Heart right ventricle (tissue), 16 donors: ENCODE measurements at regions of chr15 and their contacts with region 1.

Region 1: GRCh38 chr15:100349696-100350433 is 8.1 kb upstream of the ADAMTS17 start:
- DNase-seq: peak; percentile 93
- ATAC-seq: peak; percentile 95 to 98 (median 98)
- H3K4me3 ChIP-seq: peak overlapping the region; percentile 38 to 90 (median 77)
- H3K27ac ChIP-seq: peak overlapping the region; percentile 64 to 99 (median 94)
- H3K4me1 ChIP-seq: peaks cover 0 to 15% (median 5%) of the 10 kb centered on the region in 9 donors
- H3K27me3 ChIP-seq: peaks cover 0 to 15% (median 11%) of the 10 kb centered on the region in 7 donors
- CTCF ChIP-seq: peak; percentile 78 to 93 (median 81)

Region 2: DNA sequence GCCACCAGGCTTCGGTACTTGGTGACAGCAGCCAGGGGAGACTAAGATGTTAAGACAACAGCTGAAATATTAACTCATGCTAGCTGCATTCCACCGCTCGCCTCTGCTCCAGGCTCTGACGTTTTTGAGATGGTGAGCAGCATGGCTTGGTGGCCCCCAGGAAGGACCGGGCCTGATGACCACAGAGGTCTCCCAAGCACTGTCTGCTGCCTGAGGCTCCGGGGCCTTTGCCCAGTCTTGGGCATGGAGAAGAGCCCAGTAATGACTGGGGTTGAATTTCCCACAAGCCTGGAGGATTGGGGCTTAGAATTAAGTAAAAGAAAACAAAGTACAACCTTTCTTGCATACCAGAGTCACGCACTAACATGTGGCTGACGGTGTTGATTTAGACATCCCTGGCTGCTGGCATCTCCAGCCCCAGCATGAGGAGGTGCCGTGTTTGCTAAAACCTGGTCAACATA is 373.0 kb before region 1 on chr15:
- intact Hi-C with region 1: loop called in 1 of 10 experiments (anchors 10 kb)
- DNase-seq: no peak
- ATAC-seq: no peak
- H3K4me3 ChIP-seq: no peak overlapping the region
- H3K27ac ChIP-seq: no peak overlapping the region
- H3K4me1 ChIP-seq: peaks cover 0 to 11% (median 0%) of the 10 kb centered on the region in 9 donors
- H3K27me3 ChIP-seq: no peaks in the 10 kb centered on the region
- CTCF ChIP-seq: no peak

Region 3: GRCh38 chr15:100565591-100565990 is 215.7 kb after region 1 on chr15:
- intact Hi-C with region 1: loop called in 5 of 10 experiments (anchors 2 to 10 kb)
- DNase-seq: no peak
- ATAC-seq: no peak
- H3K4me3 ChIP-seq: no peak overlapping the region
- H3K27ac ChIP-seq: no peak overlapping the region
- H3K4me1 ChIP-seq: peaks cover 0 to 5% (median 0%) of the 10 kb centered on the region in 9 donors
- H3K27me3 ChIP-seq: no peaks in the 10 kb centered on the region
- CTCF ChIP-seq: no peak

Region 4: DNA sequence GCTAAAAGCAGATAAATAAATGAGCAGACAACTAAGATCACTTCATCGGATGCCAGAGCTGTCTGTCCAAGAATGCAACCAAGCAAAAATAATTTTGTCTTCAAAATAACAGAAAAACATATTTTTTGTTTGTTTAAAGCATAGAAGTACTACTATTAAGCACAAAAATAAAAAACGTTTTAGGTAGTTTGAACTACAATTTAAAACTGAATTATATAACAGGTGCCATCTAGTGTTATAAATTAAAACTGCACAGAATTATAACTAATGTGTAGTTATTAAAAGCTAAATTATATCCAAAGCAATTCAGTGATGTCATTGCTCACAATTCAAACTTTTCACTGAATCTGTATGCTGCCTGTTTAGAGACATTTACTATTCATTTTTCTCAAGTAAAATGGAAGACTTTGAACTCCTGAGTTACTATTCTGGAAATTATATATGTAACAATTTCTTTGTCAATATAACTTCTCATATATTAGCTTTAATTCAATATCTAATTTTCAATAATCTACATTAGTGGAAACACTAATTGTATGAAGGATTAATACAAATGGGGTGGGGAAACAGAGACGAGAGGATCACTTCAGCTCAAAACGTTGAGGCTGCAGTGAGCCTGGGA is 222.6 kb after region 1 on chr15:
- intact Hi-C with region 1: loop called in 9 of 10 experiments (anchors 1 to 10 kb)
- DNase-seq: no peak
- ATAC-seq: no peak
- H3K4me3 ChIP-seq: no peak overlapping the region
- H3K27ac ChIP-seq: no peak overlapping the region
- H3K4me1 ChIP-seq: peaks cover 0 to 4% (median 0%) of the 10 kb centered on the region in 9 donors
- H3K27me3 ChIP-seq: no peaks in the 10 kb centered on the region
- CTCF ChIP-seq: peak; percentile 35 to 72 (median 67)

Region 5: DNA sequence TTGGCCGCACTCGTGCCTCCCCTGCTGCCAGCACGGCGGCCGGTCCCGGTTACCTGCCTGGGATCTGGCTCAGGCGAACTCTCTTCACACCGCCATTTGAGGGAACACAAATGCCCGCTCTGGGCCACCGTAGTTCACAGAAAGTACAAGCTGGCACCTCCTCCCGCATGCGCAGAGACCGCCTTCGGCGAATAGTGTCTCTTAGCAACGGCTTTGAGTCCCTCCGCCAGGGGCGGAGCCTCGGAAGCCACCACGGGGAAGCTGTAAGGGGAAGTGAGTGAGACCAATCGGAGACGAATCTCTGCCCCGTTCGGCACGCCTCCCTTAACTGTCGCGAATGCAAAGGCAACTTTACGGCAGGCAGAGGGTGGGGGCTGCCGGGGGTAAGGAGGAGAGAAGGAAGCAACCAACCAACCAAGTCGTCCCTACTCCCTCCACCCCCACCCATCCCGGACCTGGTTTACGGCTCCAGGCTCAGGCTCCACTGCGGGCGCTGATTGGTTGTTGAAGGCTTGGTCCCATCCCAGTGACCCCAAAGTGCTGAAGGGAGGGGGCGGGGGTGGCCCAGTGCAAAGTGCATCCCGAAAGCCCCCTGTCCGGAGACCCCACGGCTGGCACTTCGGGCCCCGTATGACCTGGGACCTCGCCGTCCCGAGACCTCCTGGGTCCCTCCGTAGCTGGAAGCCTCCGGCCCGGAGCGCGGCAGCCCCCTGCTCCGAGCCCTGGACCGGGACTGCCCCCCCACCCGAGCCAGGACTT is 252.4 kb after region 1 on chr15 and contains the starts of genes ASB7 and LINS1:
- intact Hi-C with region 1: loop called in 2 of 10 experiments (anchors 1 to 10 kb)
- DNase-seq: peak; percentile 100
- ATAC-seq: peak; percentile 97 to 99 (median 99)
- H3K4me3 ChIP-seq: peak within 1 kb of the TSS; percentile 63 to 100 (median 84)
- H3K27ac ChIP-seq: peak within 1 kb of the TSS; percentile 2 to 92 (median 88)
- H3K4me1 ChIP-seq: peaks cover 3 to 47% (median 37%) of the 10 kb centered on the region in 9 donors
- H3K27me3 ChIP-seq: no peaks in the 10 kb centered on the region
- CTCF ChIP-seq: peak in 1 of 9 donors; percentile 10
- total RNA-seq, gene ASB7: 4.4 to 7.0 (median 6.1) TPM
- total RNA-seq, gene LINS1: 5.4 to 12.2 (median 7.3) TPM

Region 6: GRCh38 chr15:101008158-101009139 is 658.6 kb after region 1 on chr15:
- intact Hi-C with region 1: loop called in 6 of 10 experiments (anchors 5 to 10 kb)
- DNase-seq: peak; percentile 77 to 85
- ATAC-seq: peak; percentile 83 to 89 (median 86)
- H3K4me3 ChIP-seq: peak overlapping the region; percentile 23 to 62 (median 54)
- H3K27ac ChIP-seq: peak overlapping the region in 2 of 10 donors; percentile 31 to 48
- H3K4me1 ChIP-seq: peaks cover 2 to 23% (median 17%) of the 10 kb centered on the region in 9 donors
- H3K27me3 ChIP-seq: no peaks in the 10 kb centered on the region
- CTCF ChIP-seq: peak; percentile 95 to 99 (median 98)